ENCODE measurements at regions of chr11 and their contacts with region 1.

Region 1: GRCh38 chr11:102256251-102256650 is 61.0 kb upstream of the BIRC3 start:
- DNase-seq: no peak
- H3K4me3 ChIP-seq: no peak overlapping the region
- H3K4me3 Mint-ChIP-seq: no peak overlapping the region
- H3K27ac ChIP-seq: no peak overlapping the region
- H3K27ac Mint-ChIP-seq: no peak overlapping the region
- H3K4me1 ChIP-seq: no peaks in the 10 kb centered on the region
- H3K4me1 Mint-ChIP-seq: no peaks in the 10 kb centered on the region
- H3K27me3 ChIP-seq: no peaks in the 10 kb centered on the region
- H3K27me3 Mint-ChIP-seq: no peaks in the 10 kb centered on the region

Region 2: GRCh38 chr11:102117472-102118113 is 138.7 kb before region 1 on chr11:
- CTCF ChIA-PET with region 1: no interaction called
- POLR2A ChIA-PET with region 1: interaction called, 11 read pairs
- DNase-seq: no peak
- H3K4me3 ChIP-seq: no peak overlapping the region
- H3K4me3 Mint-ChIP-seq: no peak overlapping the region
- H3K27ac ChIP-seq: no peak overlapping the region
- H3K27ac Mint-ChIP-seq: no peak overlapping the region
- H3K4me1 ChIP-seq: no peaks in the 10 kb centered on the region
- H3K4me1 Mint-ChIP-seq: peaks cover under 1 to 8% (median 6%) of the 10 kb centered on the region in 3 donors
- H3K27me3 ChIP-seq: peaks cover 4% of the 10 kb centered on the region
- H3K27me3 Mint-ChIP-seq: peaks cover 18 to 57% of the 10 kb centered on the region in 2 donors